Activated naive CD4-positive, alpha-beta T cell treated with anti-CD3 and anti-CD28 coated beads for 36 hours (primary cell): ENCODE measurements at regions of chr3 and their contacts with region 1.

Region 1: GRCh38 chr3:138180375-138181029 is 5.8 kb upstream of the DBR1 start:
- DNase-seq: peak; percentile 76
- H3K4me3 Mint-ChIP-seq: no peak overlapping the region
- H3K27ac Mint-ChIP-seq: no peak overlapping the region
- H3K4me1 Mint-ChIP-seq: peaks cover 3% of the 10 kb centered on the region
- H3K27me3 Mint-ChIP-seq: peaks cover 1% of the 10 kb centered on the region

Region 2: DNA sequence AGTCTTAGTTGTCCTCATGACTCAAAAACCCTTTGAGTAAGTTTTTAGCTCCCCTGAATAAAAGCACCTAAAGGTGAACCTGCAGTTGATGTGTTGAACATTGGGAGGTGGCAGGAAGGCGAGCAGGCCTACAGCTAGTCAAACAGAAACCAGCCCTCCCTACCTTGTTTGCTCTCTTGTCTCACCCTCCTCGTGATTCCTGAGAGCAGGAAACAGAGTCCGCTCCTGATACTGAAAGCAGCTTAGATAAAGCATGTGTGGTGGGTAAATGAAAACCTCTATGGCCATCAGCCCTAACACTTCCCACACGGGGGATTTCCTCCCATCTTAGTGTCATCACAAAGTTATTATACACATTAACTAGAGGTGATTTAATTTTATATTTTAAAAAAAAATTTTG is 192.3 kb before region 1 on chr3:
- CTCF ChIA-PET with region 1: no interaction called
- intact Hi-C with region 1: no loop called
- DNase-seq: no peak
- H3K4me3 Mint-ChIP-seq: no peak overlapping the region
- H3K27ac Mint-ChIP-seq: no peak overlapping the region
- H3K4me1 Mint-ChIP-seq: no peaks in the 10 kb centered on the region
- H3K27me3 Mint-ChIP-seq: peaks cover 4% of the 10 kb centered on the region

Region 3: DNA sequence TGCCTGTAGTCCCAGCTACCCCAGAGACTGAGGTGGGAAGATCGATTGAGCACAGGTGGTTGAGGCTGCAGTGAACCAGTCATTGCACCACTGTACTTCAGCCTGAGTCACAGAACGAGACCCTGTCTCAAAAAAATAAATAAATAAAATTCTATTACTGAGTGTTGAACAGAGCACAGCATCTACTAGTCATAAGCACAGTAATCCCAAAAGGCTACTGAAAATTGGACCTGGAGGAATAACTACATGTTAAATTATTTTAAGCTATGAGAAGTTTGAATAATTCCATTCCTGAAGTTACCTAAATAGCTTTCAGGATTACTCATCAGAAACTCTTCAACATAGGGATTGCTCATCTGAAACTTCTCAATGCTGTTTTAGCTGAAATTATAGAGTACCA is 50.0 kb after region 1 on chr3:
- CTCF ChIA-PET with region 1: no interaction called
- intact Hi-C with region 1: no loop called
- DNase-seq: no peak
- H3K4me3 Mint-ChIP-seq: no peak overlapping the region
- H3K27ac Mint-ChIP-seq: no peak overlapping the region
- H3K4me1 Mint-ChIP-seq: peaks cover 27% of the 10 kb centered on the region
- H3K27me3 Mint-ChIP-seq: no peaks in the 10 kb centered on the region

Region 4: DNA sequence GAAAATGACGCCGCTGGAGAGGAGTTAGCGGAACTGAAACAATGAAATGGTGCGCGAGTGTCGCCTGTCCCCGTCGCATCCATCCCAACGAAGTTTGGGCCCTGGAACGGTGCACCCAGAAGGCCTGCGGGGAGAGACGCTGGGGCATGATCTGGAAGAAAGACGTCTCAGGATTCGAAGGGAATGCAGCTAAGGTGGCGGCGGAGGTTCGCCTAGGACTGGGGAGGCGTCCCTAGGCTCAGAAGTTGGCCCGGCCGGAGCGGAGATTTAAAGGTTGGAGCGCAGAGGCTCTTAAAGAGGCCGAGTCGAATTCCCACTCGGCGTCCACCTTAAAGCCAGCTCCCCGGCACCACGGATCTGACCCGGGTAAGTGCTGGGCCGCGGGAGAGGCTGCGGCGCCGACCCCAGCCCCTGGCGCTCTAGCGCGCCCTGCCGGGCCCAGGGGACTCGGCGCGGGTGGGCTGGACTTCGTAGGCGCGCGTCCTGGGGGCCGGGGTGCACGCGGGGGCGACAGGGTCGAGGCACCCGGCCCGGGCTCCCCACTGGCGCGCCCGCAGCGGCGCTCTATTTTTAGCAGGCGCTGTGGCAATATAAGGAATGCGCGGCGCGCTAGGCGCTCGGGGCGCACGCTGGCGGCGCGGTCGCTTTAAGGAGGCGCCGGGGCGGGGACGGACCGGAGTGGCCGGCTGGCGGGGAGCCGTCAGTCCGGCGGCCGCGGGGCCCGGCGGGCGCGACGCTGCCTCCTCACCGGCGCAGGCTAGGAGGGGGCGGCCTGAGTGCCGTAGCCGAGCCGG is 167.7 kb after region 1 on chr3 and contains the start of gene MRAS:
- CTCF ChIA-PET with region 1: interaction called, 9 read pairs
- intact Hi-C with region 1: loop called (anchors 1 kb)
- DNase-seq: peak; percentile 44
- H3K4me3 Mint-ChIP-seq: peak within 1 kb of the TSS; percentile 94
- H3K27ac Mint-ChIP-seq: peak within 1 kb of the TSS; percentile 62
- H3K4me1 Mint-ChIP-seq: peaks cover 6% of the 10 kb centered on the region
- H3K27me3 Mint-ChIP-seq: peaks cover 26% of the 10 kb centered on the region
- total RNA-seq, gene MRAS: 0.52 to 0.62 TPM

Region 5: DNA sequence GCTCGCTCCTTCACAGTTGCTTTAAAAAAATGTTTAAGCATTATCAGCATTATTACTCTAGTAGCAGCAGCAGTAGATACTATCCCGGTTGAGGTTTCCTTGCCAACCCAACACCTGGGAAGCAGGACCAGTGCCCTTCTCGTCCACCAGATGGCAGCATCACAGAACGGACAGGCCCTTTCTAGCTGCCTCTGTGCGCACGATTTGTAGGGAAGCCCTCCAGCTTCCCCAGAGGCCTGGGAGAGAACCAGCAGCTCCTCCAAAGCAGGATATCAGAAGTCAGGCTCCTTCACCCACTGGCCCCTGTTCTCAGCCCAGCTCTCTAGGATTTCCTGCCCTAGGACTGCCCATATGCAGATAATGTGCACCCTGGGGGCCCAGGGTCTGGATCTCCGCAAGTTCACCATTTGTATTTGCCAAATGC is 237.1 kb after region 1 on chr3:
- CTCF ChIA-PET with region 1: interaction called, 5 read pairs
- intact Hi-C with region 1: loop called (anchors 2 kb)
- DNase-seq: peak; percentile 86
- H3K4me3 Mint-ChIP-seq: no peak overlapping the region
- H3K27ac Mint-ChIP-seq: no peak overlapping the region
- H3K4me1 Mint-ChIP-seq: peaks cover 4% of the 10 kb centered on the region
- H3K27me3 Mint-ChIP-seq: peaks cover 6% of the 10 kb centered on the region

Region 6: GRCh38 chr3:138479438-138479863 is 298.9 kb after region 1 on chr3:
- CTCF ChIA-PET with region 1: no interaction called
- intact Hi-C with region 1: loop called (anchors 2 kb)
- DNase-seq: peak; percentile 65
- H3K4me3 Mint-ChIP-seq: no peak overlapping the region
- H3K27ac Mint-ChIP-seq: no peak overlapping the region
- H3K4me1 Mint-ChIP-seq: no peaks in the 10 kb centered on the region
- H3K27me3 Mint-ChIP-seq: no peaks in the 10 kb centered on the region